ENCODE measurements at regions of chr7 and their contacts with region 1.

Region 1: DNA sequence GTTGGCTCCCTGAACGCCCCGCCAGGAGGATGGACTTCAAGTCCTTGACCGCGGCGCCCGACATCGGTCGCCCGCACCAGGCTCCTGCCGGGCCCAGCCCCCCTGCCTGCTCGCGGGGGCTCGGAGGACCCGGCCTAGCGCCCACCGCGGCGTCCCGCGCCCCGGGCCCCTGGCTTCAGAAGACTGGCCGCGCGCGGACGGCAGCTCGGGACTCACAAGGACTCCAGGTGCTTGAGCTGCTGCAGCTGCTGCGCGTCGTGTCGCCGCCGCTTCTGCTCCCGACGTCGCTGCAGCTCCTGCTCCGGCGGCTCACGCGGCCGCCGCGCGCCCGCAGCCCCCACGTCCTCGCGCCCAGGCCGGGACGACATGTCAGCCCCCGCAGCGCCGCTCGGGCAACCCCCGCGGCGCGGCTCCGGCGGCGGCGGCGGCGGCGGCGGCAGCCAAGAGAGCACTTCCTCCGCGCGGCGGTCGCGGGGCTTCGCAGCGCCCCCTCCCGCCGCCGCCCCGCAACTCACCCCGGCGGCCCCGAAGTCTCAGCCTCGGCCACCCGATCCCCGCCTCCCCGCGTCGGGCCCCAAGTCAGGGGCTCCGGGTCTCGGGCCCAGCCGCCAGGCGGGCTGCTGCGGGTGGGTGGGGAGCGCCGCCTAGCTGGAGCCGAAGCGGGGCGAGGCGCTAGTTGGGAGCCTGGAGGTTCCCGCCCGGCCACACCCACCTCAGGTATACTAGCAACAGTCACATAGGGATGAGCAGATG is at the start of gene RP9:
- DNase-seq: peak; percentile 99
- H3K4me3 ChIP-seq: peak within 1 kb of the TSS; percentile 85 to 95
- H3K27ac ChIP-seq: peak within 1 kb of the TSS; percentile 57 to 80
- H3K4me1 ChIP-seq: peaks cover 5 to 15% of the 10 kb centered on the region in 2 experiments; a peak in 3 of 4 replicates
- H3K27me3 ChIP-seq: no peaks in the 10 kb centered on the region
- CTCF ChIP-seq: peak; percentile 61
- EP300 ChIP-seq: peak in 1 of 2 experiments; percentile 75; a peak in 1 of 4 replicates
- RAD21 ChIP-seq: peak; percentile 38
- polyA plus RNA-seq, gene RP9: 31.6 and 32.0 TPM in 2 replicates

Region 2: DNA sequence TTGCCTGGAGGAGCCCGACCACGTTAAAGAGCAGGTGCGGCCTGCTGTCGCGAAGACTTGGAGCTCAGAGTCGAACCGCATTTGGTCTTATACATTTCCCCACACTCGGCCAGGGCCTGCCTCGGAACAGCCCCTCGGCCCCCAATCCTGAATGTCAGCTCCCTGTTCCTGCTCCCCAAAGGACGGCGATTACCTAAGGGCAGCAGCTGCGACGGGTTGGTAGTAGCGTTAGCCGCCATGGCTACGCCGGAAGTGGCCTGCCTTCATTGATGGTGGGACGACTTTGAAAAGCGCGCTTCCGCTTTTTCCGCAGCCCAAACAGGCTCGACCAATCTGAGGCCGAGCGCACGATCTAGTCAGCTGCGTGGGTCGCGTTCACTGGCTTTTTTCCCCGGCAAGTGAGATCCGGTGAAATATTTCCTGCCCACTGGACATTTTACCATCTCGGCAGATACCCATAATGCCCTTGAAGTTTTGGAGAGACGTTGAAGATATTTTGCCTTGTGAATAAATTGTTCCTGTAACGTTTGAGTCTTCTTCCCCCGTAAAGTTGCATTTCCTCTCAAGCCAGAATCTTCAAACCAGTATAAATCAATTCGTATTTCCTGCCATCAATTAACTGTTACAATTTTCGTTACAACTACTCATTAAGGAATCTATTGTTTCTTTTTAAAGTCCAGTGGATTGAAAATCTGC is 618.9 kb before region 1 on chr7 and contains the start of gene LSM5:
- CTCF ChIA-PET with region 1: interaction called, 10 read pairs
- POLR2A ChIA-PET with region 1: interaction called, 3 read pairs
- DNase-seq: peak; percentile 84
- H3K4me3 ChIP-seq: peak within 1 kb of the TSS; percentile 83 to 85
- H3K27ac ChIP-seq: peak within 1 kb of the TSS; percentile 87 to 96
- H3K4me1 ChIP-seq: peaks cover 0 to 8% of the 10 kb centered on the region in 2 experiments; a peak in 2 of 4 replicates
- H3K27me3 ChIP-seq: no peaks in the 10 kb centered on the region
- CTCF ChIP-seq: no peak
- EP300 ChIP-seq: peak; percentile 33 to 42; a peak in 2 of 4 replicates
- RAD21 ChIP-seq: no peak
- polyA plus RNA-seq, gene LSM5: 21.2 and 22.2 TPM in 2 replicates

Region 3: DNA sequence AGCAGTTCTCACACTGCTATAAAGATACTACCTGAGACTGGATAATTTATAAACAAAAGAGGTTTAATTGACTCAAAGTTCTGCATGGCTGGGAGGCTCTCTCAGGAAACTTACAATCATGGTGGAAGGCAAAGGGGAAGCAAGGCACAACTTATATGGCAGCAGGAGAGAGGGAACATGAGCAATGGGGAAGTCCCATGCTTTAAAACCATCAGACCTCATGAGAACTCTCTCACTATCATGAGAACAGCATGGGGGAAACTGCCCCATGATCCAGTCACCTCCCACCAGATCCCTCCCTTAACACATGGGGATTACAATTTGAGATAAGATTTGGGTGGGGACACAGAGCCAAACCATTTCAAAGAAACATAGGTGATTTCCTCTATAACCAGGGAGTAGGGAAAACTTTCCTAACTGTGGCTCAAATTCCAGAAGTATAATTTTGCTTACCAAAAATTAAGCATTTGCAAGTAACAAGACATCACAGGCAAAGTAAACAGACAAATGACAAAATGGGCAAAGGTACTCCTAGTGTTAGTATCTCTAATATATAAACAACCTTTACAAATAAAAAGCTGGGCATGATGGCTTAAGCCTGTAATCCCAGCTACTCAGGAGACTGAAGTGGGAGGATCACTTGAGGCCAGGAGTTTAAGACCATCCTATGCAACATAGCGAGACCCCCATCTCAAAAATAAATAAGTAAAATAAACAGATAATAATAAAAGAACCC is 305.6 kb before region 1 on chr7:
- CTCF ChIA-PET with region 1: interaction called, 72 read pairs
- POLR2A ChIA-PET with region 1: no interaction called
- DNase-seq: no peak
- H3K4me3 ChIP-seq: no peak overlapping the region
- H3K27ac ChIP-seq: no peak overlapping the region
- H3K4me1 ChIP-seq: no peaks in the 10 kb centered on the region; a peak in 1 of 4 replicates
- H3K27me3 ChIP-seq: no peaks in the 10 kb centered on the region
- CTCF ChIP-seq: no peak
- EP300 ChIP-seq: no peak
- RAD21 ChIP-seq: no peak

Region 4: DNA sequence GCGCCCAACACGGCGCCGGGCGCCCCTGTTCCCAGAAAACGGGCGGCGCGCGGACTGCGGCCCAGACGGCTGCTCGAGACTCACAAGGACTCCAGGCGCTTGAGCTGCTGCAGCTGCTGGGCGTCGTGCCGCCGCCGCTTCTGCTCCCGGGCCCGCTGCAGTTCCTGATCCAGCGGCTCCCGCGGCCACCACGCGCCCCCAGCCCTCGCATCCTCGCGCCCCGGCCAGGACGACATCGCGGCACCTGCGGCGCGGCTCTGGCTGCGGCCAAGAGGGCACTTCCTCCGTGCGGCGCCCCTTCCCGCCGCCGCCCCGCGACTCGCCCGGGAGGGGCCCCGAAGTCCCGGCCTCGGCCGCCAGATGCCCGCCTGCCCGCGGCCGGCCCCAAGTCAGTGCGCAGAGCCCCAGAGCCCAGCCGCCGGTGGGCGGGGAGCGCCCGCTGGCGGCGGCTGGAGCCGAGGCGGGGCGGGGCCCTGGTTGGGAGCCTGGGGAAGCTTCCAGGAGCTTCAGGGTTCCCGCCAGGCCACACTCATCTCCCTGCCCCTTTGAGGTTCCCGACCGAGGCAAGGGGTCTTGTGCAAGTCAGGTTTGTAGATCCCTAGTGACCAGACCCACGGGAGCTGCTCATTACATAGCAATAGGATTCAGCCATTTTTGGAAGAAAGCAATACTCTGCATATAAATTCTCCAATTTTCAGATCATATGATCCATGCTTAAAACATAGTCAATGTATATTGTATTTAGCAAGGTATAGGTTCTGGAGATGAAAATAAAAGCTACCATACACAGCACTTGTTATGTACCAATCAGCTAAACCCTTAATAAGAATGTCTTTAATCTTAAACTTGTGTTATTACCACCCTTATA is 166.2 kb before region 1 on chr7:
- CTCF ChIA-PET with region 1: interaction called, 32 read pairs
- POLR2A ChIA-PET with region 1: no interaction called
- DNase-seq: peak; percentile 99
- H3K4me3 ChIP-seq: peak overlapping the region; percentile 71 to 82
- H3K27ac ChIP-seq: peak overlapping the region; percentile 81 to 91
- H3K4me1 ChIP-seq: peaks cover 3 to 10% of the 10 kb centered on the region in 2 experiments; a peak in 3 of 4 replicates
- H3K27me3 ChIP-seq: no peaks in the 10 kb centered on the region
- CTCF ChIP-seq: peak; percentile 64
- EP300 ChIP-seq: no peak; a peak in 3 of 4 replicates
- RAD21 ChIP-seq: peak; percentile 74

Region 5: GRCh38 chr7:33091111-33091531 is 18.1 kb before region 1 on chr7:
- CTCF ChIA-PET with region 1: interaction called, 30 read pairs
- POLR2A ChIA-PET with region 1: no interaction called
- DNase-seq: no peak
- H3K4me3 ChIP-seq: no peak overlapping the region
- H3K27ac ChIP-seq: no peak overlapping the region
- H3K4me1 ChIP-seq: no peaks in the 10 kb centered on the region
- H3K27me3 ChIP-seq: no peaks in the 10 kb centered on the region
- CTCF ChIP-seq: no peak
- EP300 ChIP-seq: no peak
- RAD21 ChIP-seq: no peak